ENCODE measurements at regions of chr20 and their contacts with region 1.

Region 1: GRCh38 chr20:44217342-44218092 is 6.9 kb upstream of the OSER1 start:
- DNase-seq: peak; percentile 80
- ATAC-seq: peak; percentile 57
- H3K4me3 Mint-ChIP-seq: peak overlapping the region; percentile 62
- H3K27ac Mint-ChIP-seq: peak overlapping the region; percentile 86
- H3K4me1 Mint-ChIP-seq: peaks cover 54% of the 10 kb centered on the region
- H3K27me3 Mint-ChIP-seq: no peaks in the 10 kb centered on the region

Region 2: GRCh38 chr20:44115762-44116644 is 101.5 kb before region 1 on chr20:
- CTCF ChIA-PET with region 1: interaction called, 12 read pairs
- POLR2A ChIA-PET with region 1: no interaction called
- DNase-seq: no peak
- ATAC-seq: no peak
- H3K4me3 Mint-ChIP-seq: no peak overlapping the region
- H3K27ac Mint-ChIP-seq: no peak overlapping the region
- H3K4me1 Mint-ChIP-seq: peaks cover 17% of the 10 kb centered on the region
- H3K27me3 Mint-ChIP-seq: peaks cover 22% of the 10 kb centered on the region

Region 3: DNA sequence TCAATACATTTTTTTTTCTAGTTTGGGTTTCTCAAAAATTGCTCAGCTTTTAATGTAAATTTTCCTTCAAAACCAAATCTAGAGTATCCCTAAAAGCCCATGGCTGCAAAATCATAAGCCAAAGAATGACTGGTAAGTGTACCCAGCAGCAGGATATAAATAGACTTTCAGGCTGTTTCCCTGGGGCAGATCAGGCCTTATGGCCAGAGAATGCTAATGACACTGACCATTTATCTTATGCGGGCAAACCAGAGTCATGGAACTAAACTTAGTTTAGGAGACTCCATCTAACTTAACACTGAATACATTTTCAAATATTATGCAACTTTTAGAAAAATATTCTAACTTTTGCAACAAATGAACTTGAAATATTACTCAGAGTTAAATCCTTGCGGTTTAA is 14.4 kb before region 1 on chr20:
- CTCF ChIA-PET with region 1: interaction called, 11 read pairs
- POLR2A ChIA-PET with region 1: no interaction called
- DNase-seq: no peak
- ATAC-seq: no peak
- H3K4me3 Mint-ChIP-seq: no peak overlapping the region
- H3K27ac Mint-ChIP-seq: no peak overlapping the region
- H3K4me1 Mint-ChIP-seq: peaks cover 43% of the 10 kb centered on the region
- H3K27me3 Mint-ChIP-seq: no peaks in the 10 kb centered on the region

Region 4: GRCh38 chr20:44282192-44282591 is 64.7 kb after region 1 on chr20:
- CTCF ChIA-PET with region 1: interaction called, 20 read pairs
- POLR2A ChIA-PET with region 1: no interaction called
- DNase-seq: no peak
- ATAC-seq: no peak
- H3K4me3 Mint-ChIP-seq: no peak overlapping the region
- H3K27ac Mint-ChIP-seq: no peak overlapping the region
- H3K4me1 Mint-ChIP-seq: no peaks in the 10 kb centered on the region
- H3K27me3 Mint-ChIP-seq: no peaks in the 10 kb centered on the region

Region 5: GRCh38 chr20:44319756-44320422 is 102.4 kb after region 1 on chr20:
- CTCF ChIA-PET with region 1: interaction called, 529 read pairs
- POLR2A ChIA-PET with region 1: no interaction called
- DNase-seq: no peak
- ATAC-seq: no peak
- H3K4me3 Mint-ChIP-seq: no peak overlapping the region
- H3K27ac Mint-ChIP-seq: no peak overlapping the region
- H3K4me1 Mint-ChIP-seq: no peaks in the 10 kb centered on the region
- H3K27me3 Mint-ChIP-seq: peaks cover 2% of the 10 kb centered on the region

Region 6: DNA sequence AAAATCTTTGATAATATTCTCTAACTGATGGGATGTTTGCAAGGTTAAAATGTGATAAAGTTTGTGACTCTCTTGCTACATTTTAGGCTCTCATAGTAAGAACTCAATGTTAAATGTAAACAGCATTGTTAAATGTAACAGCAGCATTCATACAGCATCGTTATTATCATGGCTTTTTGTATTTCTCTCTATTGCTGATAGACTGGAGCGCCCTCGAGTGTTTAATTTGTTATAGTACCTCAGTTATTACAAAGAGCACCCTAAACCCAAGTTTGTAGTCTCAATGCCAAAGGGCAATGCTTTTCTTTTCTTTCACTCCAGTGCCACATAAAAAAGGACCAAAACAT is 243.3 kb after region 1 on chr20:
- CTCF ChIA-PET with region 1: interaction called, 15 read pairs
- POLR2A ChIA-PET with region 1: no interaction called
- DNase-seq: no peak
- ATAC-seq: no peak
- H3K4me3 Mint-ChIP-seq: no peak overlapping the region
- H3K27ac Mint-ChIP-seq: no peak overlapping the region
- H3K4me1 Mint-ChIP-seq: no peaks in the 10 kb centered on the region
- H3K27me3 Mint-ChIP-seq: no peaks in the 10 kb centered on the region

Region 7: GRCh38 chr20:44683263-44684046 is 465.9 kb after region 1 on chr20:
- CTCF ChIA-PET with region 1: interaction called, 11 read pairs
- POLR2A ChIA-PET with region 1: no interaction called
- DNase-seq: peak; percentile 81
- ATAC-seq: peak; percentile 84
- H3K4me3 Mint-ChIP-seq: no peak overlapping the region
- H3K27ac Mint-ChIP-seq: no peak overlapping the region
- H3K4me1 Mint-ChIP-seq: peaks cover 13% of the 10 kb centered on the region
- H3K27me3 Mint-ChIP-seq: no peaks in the 10 kb centered on the region

Measured in activated CD8-positive, alpha-beta T cell treated with anti-CD3 and anti-CD28 coated beads, Interleukin-2, amount 10 ng/mL, durations not matched to agents 7 days and 5 days (primary cell).